ENCODE measurements at regions of chr2 and their contacts with region 1.

Region 1: GRCh38 chr2:88059979-88060906 is 4.7 kb upstream of the KRCC1 start:
- DNase-seq: no peak
- H3K4me3 ChIP-seq: no peak overlapping the region
- H3K27ac ChIP-seq: no peak overlapping the region
- H3K27me3 ChIP-seq: peaks cover 4% of the 10 kb centered on the region
- CTCF ChIP-seq: peak; percentile 84

Region 2: DNA sequence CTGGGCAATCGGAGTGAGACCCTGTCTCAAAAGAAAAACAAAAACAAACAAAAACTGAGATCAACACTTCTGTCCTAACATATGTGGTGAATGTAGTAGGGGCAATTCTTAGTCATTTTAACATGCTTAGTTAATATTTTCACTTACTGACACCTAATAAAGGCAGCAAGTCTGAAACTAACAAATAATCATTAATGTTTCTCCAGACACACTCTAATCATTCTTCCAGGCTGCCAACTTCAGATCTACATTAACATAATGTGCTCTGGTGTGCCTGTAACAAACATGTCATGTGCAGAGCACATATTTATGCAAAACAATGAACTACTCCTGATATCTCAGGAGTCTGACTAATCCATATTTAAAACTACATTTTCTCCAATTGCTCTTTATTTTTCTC is 10.6 kb before region 1 on chr2:
- CTCF ChIA-PET with region 1: interaction called, 58 read pairs
- POLR2A ChIA-PET with region 1: no interaction called
- DNase-seq: no peak
- H3K4me3 ChIP-seq: no peak overlapping the region
- H3K27ac ChIP-seq: no peak overlapping the region
- H3K27me3 ChIP-seq: no peaks in the 10 kb centered on the region
- CTCF ChIP-seq: no peak

Region 3: DNA sequence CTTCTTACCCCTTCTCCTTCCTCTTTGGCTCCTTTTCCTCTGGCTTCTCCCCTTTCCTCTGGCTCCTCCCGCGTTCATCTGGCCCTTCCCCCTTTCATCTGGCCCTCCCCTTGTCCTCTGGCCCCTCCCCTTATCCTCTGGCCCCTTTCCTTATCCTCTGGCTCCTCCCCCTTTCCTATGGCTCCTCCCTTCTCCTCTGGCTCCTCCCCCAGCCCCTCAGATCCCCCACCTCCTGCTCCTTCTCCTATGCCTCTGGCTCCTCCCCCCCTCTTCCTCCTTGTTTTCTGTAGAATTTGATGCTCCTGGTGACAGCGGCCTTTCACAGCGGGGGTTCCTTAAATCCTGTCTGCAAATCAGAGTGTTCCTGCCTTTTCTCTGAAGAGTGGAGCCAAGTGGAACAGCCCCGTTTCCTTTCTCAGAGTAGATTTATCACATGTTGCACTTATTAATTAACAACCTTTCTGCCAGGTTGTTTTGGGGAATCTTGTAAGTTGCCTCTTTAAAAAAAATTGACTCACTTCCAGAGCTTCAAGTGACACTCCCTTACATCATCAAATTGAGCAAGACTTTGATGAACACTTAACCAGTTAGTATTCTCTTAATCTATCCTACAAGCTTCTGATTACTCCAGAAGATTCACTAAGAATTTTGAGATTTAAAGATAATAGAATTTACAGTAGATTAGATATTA is 39.7 kb after region 1 on chr2:
- CTCF ChIA-PET with region 1: interaction called, 10 read pairs
- POLR2A ChIA-PET with region 1: no interaction called
- DNase-seq: no peak
- H3K4me3 ChIP-seq: no peak overlapping the region
- H3K27ac ChIP-seq: no peak overlapping the region
- H3K27me3 ChIP-seq: peaks cover 4% of the 10 kb centered on the region
- CTCF ChIP-seq: no peak

Region 4: GRCh38 chr2:88159955-88160415 is 99.7 kb after region 1 on chr2:
- CTCF ChIA-PET with region 1: interaction called, 139 read pairs
- POLR2A ChIA-PET with region 1: no interaction called
- DNase-seq: peak; percentile 30
- H3K4me3 ChIP-seq: no peak overlapping the region
- H3K27ac ChIP-seq: no peak overlapping the region
- H3K27me3 ChIP-seq: peaks cover 5% of the 10 kb centered on the region
- CTCF ChIP-seq: peak; percentile 90

Region 5: DNA sequence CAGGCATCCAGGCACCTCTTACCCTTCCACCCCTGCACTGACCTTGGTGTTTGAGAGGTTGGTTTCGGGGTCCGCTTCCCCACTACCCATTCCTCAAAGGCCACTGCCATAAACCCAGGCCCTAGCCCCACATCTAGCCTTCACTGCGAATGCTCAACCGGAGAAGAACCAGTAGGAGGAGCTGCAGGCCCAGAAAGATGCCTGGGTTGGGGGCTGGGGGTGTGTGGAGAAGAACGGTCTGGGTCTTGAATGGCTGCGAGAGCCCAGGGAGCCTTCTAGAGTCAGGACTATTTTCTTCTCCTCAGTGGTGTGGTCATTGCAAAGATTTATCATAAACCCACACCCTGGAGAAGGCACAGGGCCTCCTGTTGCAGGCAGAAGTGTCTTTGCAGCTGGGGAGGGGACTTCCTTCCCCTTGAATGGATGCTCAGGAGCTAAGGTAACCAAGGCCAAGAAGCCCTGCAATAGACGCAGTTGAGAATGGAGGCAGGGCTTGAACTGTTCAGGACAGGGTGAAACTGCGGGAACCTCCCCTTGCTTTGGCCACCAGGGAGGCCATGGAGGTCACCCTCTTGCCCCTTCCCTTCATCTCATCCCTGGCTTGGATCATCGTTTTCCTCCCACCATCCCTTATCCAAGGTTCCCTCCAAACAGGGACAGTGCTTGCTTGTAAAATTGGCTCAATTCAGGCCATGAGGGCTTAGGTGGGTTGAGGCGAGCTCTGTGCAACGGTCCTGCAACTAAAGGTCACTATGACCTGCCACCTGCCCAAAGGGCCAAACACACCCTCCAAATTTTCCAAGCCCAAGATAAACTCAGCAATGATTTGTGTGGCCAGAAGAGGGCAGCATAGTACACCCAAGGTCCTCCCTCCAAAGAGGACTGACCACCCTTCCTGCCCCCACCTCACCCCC is 130.8 kb after region 1 on chr2:
- CTCF ChIA-PET with region 1: interaction called, 20 read pairs
- POLR2A ChIA-PET with region 1: no interaction called
- DNase-seq: no peak
- H3K4me3 ChIP-seq: no peak overlapping the region
- H3K27ac ChIP-seq: no peak overlapping the region
- H3K27me3 ChIP-seq: no peaks in the 10 kb centered on the region
- CTCF ChIP-seq: peak; percentile 61

Measured in AG04450 (cell line).